ENCODE measurements at regions of chr10 and their contacts with region 1.

Region 1: GRCh38 chr10:100518761-100519241 is 860 bp downstream of the SEC31B start:
- DNase-seq: peak; percentile 77
- ATAC-seq: peak; percentile 79
- H3K4me3 Mint-ChIP-seq: no peak overlapping the region
- H3K27ac Mint-ChIP-seq: peak overlapping the region; percentile 35
- H3K4me1 Mint-ChIP-seq: peaks cover 41% of the 10 kb centered on the region
- H3K27me3 Mint-ChIP-seq: no peaks in the 10 kb centered on the region

Region 2: GRCh38 chr10:100346765-100347567 is 171.8 kb before region 1 on chr10 and contains the start of gene SCD:
- CTCF ChIA-PET with region 1: interaction called, 33 read pairs
- POLR2A ChIA-PET with region 1: interaction called, 3 read pairs
- DNase-seq: peak; percentile 95
- ATAC-seq: peak; percentile 94
- H3K4me3 Mint-ChIP-seq: peak within 1 kb of the TSS; percentile 96
- H3K27ac Mint-ChIP-seq: peak within 1 kb of the TSS; percentile 90
- H3K4me1 Mint-ChIP-seq: peaks cover 67% of the 10 kb centered on the region
- H3K27me3 Mint-ChIP-seq: no peaks in the 10 kb centered on the region
- total RNA-seq, gene SCD: 239 to 240 TPM

Region 3: DNA sequence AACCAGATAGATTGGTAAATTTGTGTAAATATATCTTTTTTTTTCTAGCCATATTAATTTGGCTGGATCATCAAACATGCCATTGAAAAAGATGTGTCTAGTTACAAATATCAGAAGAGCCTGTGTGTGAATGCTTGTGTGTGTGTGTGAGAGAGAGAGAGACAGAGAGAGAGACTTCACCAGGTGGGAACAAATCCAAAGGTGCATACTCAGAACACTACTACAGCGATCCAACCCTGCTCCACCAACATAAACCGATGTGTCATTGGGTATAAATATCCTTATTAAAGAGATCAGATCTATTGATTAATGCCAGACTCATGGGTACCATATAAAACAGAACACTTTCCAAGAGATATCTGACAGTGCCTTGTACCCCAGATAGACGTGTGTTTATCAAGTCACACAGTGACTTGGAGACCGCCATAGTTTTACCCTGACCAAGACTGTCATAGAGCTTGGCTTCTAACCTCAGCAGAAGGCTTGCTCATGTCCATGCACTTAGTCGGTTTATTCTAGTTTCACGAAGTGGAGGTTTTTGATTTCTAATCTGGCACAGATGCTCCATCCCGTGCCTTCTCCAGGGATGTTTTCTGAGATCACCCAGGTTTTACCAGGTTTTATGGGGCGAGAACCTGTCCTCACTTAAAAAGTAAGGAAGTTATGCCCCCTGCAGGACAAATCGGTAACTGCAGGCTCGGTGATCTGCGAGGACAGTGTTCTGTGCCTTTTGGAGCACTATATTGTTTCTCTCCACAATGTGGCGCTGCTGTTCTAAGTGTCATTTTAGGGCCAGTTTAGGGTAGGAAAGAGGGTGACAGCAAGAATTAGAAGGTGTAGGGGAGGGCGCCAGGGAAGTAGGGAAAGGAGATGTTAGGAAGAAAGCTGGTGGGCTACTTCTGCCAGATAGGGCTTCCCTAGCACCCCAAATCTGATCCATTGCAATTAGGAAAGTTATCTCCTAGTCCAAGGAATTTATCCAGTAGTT is 85.3 kb before region 1 on chr10:
- CTCF ChIA-PET with region 1: interaction called, 146 read pairs
- POLR2A ChIA-PET with region 1: interaction called, 3 read pairs
- DNase-seq: peak; percentile 99
- ATAC-seq: peak; percentile 96
- H3K4me3 Mint-ChIP-seq: no peak overlapping the region
- H3K27ac Mint-ChIP-seq: no peak overlapping the region
- H3K4me1 Mint-ChIP-seq: peaks cover 15% of the 10 kb centered on the region
- H3K27me3 Mint-ChIP-seq: no peaks in the 10 kb centered on the region

Region 4: DNA sequence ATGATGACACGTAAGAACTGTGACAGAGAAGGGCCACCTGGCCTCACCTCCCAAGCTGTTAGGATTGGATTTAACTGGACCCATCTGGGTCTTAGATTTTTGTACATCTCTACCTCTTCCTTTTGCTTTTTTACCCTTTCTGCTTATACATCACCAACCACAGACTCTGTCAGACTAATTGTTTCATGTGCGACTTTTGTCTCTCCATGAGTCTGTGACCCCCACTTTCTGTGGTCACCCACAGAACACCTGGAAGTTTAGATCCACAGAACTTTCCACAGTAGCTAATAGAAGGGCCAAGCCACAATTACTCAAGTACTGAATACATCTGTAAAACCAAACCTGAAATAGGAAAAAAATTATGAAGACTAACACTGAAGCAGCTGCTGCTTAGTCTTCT is 22.2 kb before region 1 on chr10:
- CTCF ChIA-PET with region 1: interaction called, 33 read pairs
- POLR2A ChIA-PET with region 1: interaction called, 3 read pairs
- DNase-seq: no peak
- ATAC-seq: no peak
- H3K4me3 Mint-ChIP-seq: no peak overlapping the region
- H3K27ac Mint-ChIP-seq: peak overlapping the region; percentile 40
- H3K4me1 Mint-ChIP-seq: peaks cover 58% of the 10 kb centered on the region
- H3K27me3 Mint-ChIP-seq: no peaks in the 10 kb centered on the region

Region 5: DNA sequence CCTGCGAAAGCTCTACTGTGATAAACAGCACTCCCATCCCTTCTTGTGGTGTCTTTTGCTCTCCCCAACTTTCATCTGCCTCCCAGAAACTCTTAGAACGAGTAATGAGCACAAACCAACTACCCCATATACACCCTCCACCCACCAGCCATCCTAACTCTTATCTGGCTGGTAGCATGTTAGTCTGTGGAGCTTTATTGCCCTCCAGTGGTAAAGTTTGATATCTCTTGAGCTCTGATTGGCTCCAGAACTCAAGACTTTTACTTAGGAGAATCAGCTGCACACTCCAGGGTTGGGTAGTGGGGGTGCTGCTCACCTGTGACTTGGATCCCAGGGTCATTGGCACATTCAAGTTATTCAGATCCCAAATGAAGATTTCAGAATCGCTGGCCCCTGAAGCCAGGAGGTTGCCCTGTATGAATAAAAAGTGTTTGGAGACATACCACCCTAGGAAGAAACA is 10.1 kb before region 1 on chr10:
- CTCF ChIA-PET with region 1: interaction called, 165 read pairs
- POLR2A ChIA-PET with region 1: interaction called, 62 read pairs
- DNase-seq: peak; percentile 80
- ATAC-seq: peak; percentile 58
- H3K4me3 Mint-ChIP-seq: peak overlapping the region; percentile 78
- H3K27ac Mint-ChIP-seq: peak overlapping the region; percentile 94
- H3K4me1 Mint-ChIP-seq: peaks cover 87% of the 10 kb centered on the region
- H3K27me3 Mint-ChIP-seq: no peaks in the 10 kb centered on the region

Region 6: GRCh38 chr10:100535715-100536353 is 17.0 kb after region 1 on chr10 and contains the start of gene HIF1AN:
- CTCF ChIA-PET with region 1: interaction called, 60 read pairs
- POLR2A ChIA-PET with region 1: interaction called, 5 read pairs
- DNase-seq: peak; percentile 94
- ATAC-seq: peak; percentile 98
- H3K4me3 Mint-ChIP-seq: no peak within 1 kb of the TSS
- H3K27ac Mint-ChIP-seq: peak within 1 kb of the TSS; percentile 21
- H3K4me1 Mint-ChIP-seq: peaks cover 14% of the 10 kb centered on the region
- H3K27me3 Mint-ChIP-seq: no peaks in the 10 kb centered on the region
- total RNA-seq, gene HIF1AN: 46.5 to 48.1 TPM

Region 7: GRCh38 chr10:100614429-100615095 is 95.8 kb after region 1 on chr10:
- CTCF ChIA-PET with region 1: no interaction called
- POLR2A ChIA-PET with region 1: no interaction called
- DNase-seq: no peak
- ATAC-seq: no peak
- H3K4me3 Mint-ChIP-seq: no peak overlapping the region
- H3K27ac Mint-ChIP-seq: no peak overlapping the region
- H3K4me1 Mint-ChIP-seq: no peaks in the 10 kb centered on the region
- H3K27me3 Mint-ChIP-seq: peaks cover 38% of the 10 kb centered on the region

Measured in activated CD8-positive, alpha-beta T cell treated with anti-CD3 and anti-CD28 coated beads, Interleukin-2, amount 10 ng/mL, durations not matched to agents 7 days and 5 days (primary cell).